ENCODE measurements at regions of chr16 and their contacts with region 1.

Region 1: DNA sequence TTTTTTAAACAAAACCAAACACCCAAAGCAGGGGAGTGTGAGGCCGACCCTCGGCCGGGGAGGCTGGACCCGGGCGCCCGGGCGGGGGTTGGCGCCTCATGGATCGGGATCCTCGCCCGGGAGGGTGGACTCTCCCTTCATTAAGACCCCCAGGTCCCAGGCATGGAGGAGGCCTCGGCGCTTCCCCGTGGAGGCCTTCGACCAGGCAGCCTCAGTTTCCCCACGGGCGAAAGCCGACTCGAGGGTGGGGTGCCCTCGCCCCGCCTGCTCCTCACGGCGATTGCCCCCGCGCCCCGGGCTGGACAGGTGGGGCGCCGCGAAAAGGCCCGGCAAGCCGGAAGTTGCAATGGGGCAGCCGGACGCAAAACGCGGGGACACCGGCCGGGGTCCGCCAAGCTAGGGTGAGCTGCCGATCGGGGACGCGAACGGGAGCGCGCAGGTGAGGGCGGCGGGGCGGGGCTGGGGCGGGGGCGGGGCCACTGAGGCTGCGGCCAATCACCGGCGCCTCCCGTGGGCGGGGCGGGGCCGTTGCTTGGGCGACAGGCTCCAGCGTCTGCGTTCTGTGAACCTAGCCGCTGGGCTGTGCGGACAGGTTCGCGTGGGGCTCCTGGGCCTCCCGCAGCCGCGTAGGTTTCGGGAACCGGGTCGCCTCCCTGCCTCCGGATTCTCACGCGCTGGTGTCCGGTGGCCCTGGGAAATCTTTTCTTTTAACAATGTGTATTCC is 6.0 kb upstream of the ZNF205 start:
- DNase-seq: peak; percentile 94
- H3K4me3 ChIP-seq: peak overlapping the region; percentile 90
- H3K4me3 Mint-ChIP-seq: peak overlapping the region; percentile 71
- H3K27ac Mint-ChIP-seq: peak overlapping the region; percentile 84
- H3K4me1 ChIP-seq: peaks cover 3% of the 10 kb centered on the region; the same call in 1 of the 2 replicates
- H3K4me1 Mint-ChIP-seq: peaks cover 6% of the 10 kb centered on the region
- H3K27me3 ChIP-seq: no peaks in the 10 kb centered on the region
- H3K27me3 Mint-ChIP-seq: no peaks in the 10 kb centered on the region
- CTCF ChIP-seq: no peak

Region 2: DNA sequence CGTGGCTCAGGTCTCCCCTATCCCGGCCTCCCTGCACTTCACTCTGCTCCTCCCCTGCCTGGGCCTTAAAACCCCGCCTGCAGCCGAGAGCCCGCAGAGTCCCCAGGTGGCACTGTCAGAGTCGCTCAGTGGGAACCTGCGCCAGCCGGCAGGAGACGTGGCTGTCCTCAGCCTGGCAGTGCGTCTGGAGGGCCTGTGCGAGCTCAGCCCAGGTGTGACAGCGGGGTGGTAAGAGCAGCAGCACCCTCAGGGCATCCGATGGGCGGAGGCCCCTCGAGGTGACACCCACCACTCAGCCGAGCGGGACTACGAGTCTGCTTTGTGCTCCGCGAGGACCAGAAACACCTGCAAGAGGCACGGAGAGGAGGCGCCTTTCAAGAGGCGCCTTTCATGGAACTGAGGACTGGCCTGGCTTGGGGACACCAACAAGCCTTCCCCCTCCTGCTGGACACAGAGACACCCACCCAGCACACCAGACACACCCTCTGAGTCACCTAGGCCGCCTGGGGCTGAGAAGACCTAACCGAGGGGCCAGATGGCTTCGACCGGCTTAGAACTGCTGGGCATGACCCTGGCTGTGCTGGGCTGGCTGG is 93.4 kb before region 1 on chr16 and contains the start of gene CLDN9:
- CTCF ChIA-PET with region 1: no interaction called
- POLR2A ChIA-PET with region 1: no interaction called
- intact Hi-C with region 1: no loop called
- DNase-seq: peak in 1 of 2 experiments; percentile 43
- H3K4me3 ChIP-seq: no peak within 1 kb of the TSS
- H3K4me3 Mint-ChIP-seq: peak within 1 kb of the TSS; percentile 16
- H3K27ac Mint-ChIP-seq: peak within 1 kb of the TSS; percentile 50
- H3K4me1 ChIP-seq: peaks cover 69% of the 10 kb centered on the region
- H3K4me1 Mint-ChIP-seq: peaks cover 14% of the 10 kb centered on the region
- H3K27me3 ChIP-seq: no peaks in the 10 kb centered on the region
- H3K27me3 Mint-ChIP-seq: no peaks in the 10 kb centered on the region
- CTCF ChIP-seq: no peak
- total RNA-seq, gene CLDN9: 0.79 and 0.91 TPM in 2 replicates

Region 3: DNA sequence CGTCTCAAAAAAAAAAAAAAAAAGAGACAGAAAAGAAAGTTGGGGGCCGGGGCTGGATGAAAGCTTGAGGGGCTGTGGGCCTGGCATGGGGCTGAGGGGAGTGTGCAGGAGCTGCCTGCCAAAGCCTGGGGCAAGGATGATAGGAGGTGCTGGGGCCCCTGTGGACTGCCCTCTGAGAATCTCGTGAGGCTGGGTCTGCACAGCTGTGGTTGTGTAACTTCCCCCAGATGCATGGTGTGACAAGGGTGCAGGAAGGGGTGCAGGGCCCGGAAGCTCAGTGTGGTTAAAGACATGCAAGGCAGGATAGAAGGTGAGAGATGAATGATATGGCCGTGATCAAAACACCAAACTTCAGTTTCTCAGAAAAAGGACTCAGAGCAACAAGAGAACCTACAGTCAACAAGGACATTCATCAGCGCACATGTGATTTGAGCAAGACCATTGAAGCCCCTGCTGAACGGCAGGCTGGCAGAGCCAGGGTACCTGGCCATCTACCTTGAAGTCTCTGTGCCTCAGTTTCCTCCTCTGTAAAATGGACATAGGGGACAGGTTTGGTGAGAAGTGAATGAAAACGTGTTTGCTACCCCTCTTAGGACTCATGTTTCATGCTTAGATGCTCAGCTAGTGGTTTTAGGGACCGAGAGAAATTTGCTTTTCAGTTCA is 31.4 kb before region 1 on chr16:
- CTCF ChIA-PET with region 1: interaction called, 12 read pairs
- POLR2A ChIA-PET with region 1: no interaction called
- intact Hi-C with region 1: no loop called
- DNase-seq: no peak
- H3K4me3 ChIP-seq: no peak overlapping the region
- H3K4me3 Mint-ChIP-seq: no peak overlapping the region
- H3K27ac Mint-ChIP-seq: no peak overlapping the region
- H3K4me1 ChIP-seq: no peaks in the 10 kb centered on the region
- H3K4me1 Mint-ChIP-seq: peaks cover 9% of the 10 kb centered on the region
- H3K27me3 ChIP-seq: no peaks in the 10 kb centered on the region
- H3K27me3 Mint-ChIP-seq: peaks cover 12% of the 10 kb centered on the region
- CTCF ChIP-seq: no peak

Region 4: GRCh38 chr16:3123986-3124886 is 17.9 kb after region 1 on chr16:
- CTCF ChIA-PET with region 1: interaction called, 8 read pairs
- POLR2A ChIA-PET with region 1: no interaction called
- intact Hi-C with region 1: loop called (anchors 1 kb)
- DNase-seq: peak; percentile 95 to 96
- H3K4me3 ChIP-seq: peak overlapping the region; percentile 72
- H3K4me3 Mint-ChIP-seq: peak overlapping the region; percentile 90
- H3K27ac Mint-ChIP-seq: peak overlapping the region; percentile 87
- H3K4me1 ChIP-seq: peaks cover 4% of the 10 kb centered on the region; the same call in 1 of the 2 replicates
- H3K4me1 Mint-ChIP-seq: peaks cover 14% of the 10 kb centered on the region
- H3K27me3 ChIP-seq: no peaks in the 10 kb centered on the region
- H3K27me3 Mint-ChIP-seq: no peaks in the 10 kb centered on the region
- CTCF ChIP-seq: peak in 1 of 2 experiments; percentile 29

Measured in Caco-2 (cell line).